Heart left ventricle (tissue), 16 donors: ENCODE measurements at regions of chr20 and their contacts with region 1.

Region 1: DNA sequence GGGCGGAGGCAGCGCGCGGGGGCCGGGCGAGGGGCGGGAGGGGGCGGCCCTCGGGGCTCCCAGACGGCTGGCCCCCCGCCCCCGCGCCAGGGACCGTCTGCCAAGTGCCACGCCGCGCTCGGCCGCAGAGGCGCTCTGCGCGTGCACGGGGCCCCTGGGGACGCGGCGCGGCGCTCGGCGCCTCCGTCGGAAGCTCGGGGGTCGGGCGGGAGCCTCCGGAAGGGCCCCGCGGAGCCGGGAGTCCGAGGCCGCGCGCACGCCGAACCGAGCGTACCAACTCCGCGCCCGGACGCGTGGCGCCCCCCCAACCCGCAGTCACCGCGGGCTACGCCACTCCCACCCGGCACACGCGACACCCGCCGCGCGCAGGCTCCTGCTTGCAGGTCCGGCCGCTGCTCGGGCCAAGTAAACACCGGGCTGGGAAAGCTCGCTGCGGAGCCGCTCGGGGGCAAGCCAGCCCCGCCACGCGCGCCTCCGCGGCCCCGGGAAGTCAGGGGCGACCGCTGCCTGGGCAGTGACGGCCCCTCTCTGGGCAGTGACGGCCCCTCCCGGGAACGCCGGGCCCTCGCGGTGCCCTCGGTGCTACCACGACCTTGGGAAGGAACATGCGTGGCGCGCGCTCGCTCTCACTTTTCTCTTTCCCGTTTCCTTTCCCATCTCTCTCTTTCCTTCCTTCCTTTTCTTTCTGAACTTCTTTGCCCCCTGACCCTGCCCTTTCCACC is 384 bp upstream of the PREX1 start:
- DNase-seq: peak; percentile 81 to 91 (median 86)
- ATAC-seq: peak; percentile 6 to 83 (median 73)
- H3K4me3 ChIP-seq: peak overlapping the region; percentile 45 to 89 (median 66)
- H3K27ac ChIP-seq: peak overlapping the region; percentile 19 to 92 (median 67)
- H3K4me1 ChIP-seq: peaks cover 0 to 69% (median 22%) of the 10 kb centered on the region in 12 donors
- H3K27me3 ChIP-seq: no peaks in the 10 kb centered on the region
- CTCF ChIP-seq: peak in 5 of 12 donors; percentile 12 to 30 (median 22)
- POLR2A ChIP-seq: peak in 1 of 2 donors; percentile 59

Region 2: GRCh38 chr20:48614575-48615279 is 213.5 kb before region 1 on chr20:
- intact Hi-C with region 1: no loop called
- DNase-seq: no peak
- ATAC-seq: no peak
- H3K4me3 ChIP-seq: no peak overlapping the region
- H3K27ac ChIP-seq: no peak overlapping the region
- H3K4me1 ChIP-seq: peaks cover 0 to 3% (median under 1%) of the 10 kb centered on the region in 12 donors
- H3K27me3 ChIP-seq: peaks cover 0 to 6% (median 0%) of the 10 kb centered on the region in 9 donors
- CTCF ChIP-seq: no peak
- POLR2A ChIP-seq: no peak

Region 3: DNA sequence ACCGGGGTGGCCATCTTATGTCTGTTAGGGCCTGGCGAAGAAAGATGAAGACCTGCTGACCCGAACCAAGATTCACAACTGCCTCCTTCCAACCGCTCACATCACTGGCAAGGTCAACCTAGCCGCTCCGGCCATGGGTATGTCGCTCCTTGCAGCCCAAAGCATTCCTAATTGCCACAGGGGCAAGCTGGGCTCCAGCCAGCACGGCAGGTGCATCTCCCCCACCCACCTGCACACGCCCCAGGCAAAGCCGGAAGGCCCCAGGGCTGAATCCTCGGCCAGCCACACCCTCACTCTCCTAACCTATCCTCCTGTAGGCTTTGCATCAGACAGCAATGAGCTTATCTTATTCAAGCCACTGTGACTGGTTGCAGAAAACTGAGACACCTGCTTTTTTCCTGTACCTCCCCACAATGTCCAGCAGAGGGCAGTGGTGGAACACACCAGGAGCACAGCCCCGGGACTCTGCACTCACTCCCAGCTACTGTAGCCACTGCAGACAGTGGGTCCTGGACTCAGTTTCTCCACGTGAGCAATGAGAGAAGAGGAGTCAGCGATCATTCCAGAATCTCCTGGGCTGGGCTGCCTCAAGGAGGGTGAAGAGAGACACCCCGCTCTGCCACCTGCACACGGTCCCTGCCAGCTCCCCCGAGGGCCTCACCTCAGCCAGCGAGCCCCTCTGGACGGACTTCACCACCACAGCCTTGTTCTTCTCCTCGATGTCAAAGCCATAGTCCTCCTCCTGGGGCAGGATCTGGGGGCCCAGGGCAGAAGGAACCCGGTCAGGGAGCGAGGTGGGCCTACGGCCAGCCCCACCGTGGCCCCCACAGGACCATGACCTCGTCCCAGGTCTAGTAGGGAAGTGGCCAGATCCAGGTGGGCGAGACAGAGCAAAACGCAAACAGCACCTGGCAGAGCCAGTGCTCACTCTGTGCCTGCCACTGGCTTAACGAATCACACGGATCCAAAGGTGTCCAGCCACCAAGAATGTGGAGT is 170.4 kb before region 1 on chr20:
- intact Hi-C with region 1: loop called in 8 of 10 experiments (anchors 5 to 10 kb)
- DNase-seq: peak in 4 of 5 donors; percentile 64 to 70 (median 68)
- ATAC-seq: peak; percentile 78 to 90 (median 84)
- H3K4me3 ChIP-seq: no peak overlapping the region
- H3K27ac ChIP-seq: no peak overlapping the region
- H3K4me1 ChIP-seq: peaks cover 0 to 8% (median 0%) of the 10 kb centered on the region in 12 donors
- H3K27me3 ChIP-seq: no peaks in the 10 kb centered on the region
- CTCF ChIP-seq: peak; percentile 91 to 99 (median 95)
- POLR2A ChIP-seq: no peak

Region 4: DNA sequence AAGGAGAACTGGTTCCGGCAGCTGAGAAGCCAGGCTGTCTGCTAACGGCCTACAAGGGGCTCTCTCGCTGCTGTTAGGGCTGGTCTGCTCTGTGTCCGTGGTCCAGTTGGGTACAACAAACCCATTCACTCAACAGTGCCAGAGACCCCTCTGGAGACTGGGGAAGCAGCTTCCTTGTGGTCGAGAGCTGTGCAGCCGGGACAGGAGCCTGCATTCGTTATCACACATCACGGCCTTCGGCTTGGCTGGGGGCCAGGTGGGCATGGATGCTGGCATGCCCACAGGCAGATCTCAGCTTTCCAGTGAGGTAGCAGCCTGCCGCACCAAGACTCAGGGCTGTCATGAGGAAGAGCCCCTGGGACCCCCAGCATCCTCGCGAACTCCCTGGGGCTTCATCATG is 125.1 kb before region 1 on chr20:
- intact Hi-C with region 1: loop called in 1 of 10 experiments (anchors 5 kb)
- DNase-seq: peak in 4 of 5 donors; percentile 43 to 77 (median 70)
- ATAC-seq: peak in 3 of 4 donors; percentile 23 to 51 (median 44)
- H3K4me3 ChIP-seq: no peak overlapping the region
- H3K27ac ChIP-seq: peak overlapping the region in 2 of 12 donors; percentile 24 to 58
- H3K4me1 ChIP-seq: peaks cover 0 to 50% (median 22%) of the 10 kb centered on the region in 12 donors
- H3K27me3 ChIP-seq: no peaks in the 10 kb centered on the region
- CTCF ChIP-seq: no peak
- POLR2A ChIP-seq: no peak

Region 5: GRCh38 chr20:48760403-48760983 is 67.7 kb before region 1 on chr20:
- intact Hi-C with region 1: loop called in 2 of 10 experiments (anchors 5 kb)
- DNase-seq: peak in 3 of 5 donors; percentile 32 to 66 (median 41)
- ATAC-seq: peak; percentile 23 to 68 (median 57)
- H3K4me3 ChIP-seq: peak overlapping the region in 1 of 12 donors; percentile 23
- H3K27ac ChIP-seq: peak overlapping the region; percentile 26 to 87 (median 62)
- H3K4me1 ChIP-seq: peaks cover 0 to 92% (median 23%) of the 10 kb centered on the region in 12 donors
- H3K27me3 ChIP-seq: no peaks in the 10 kb centered on the region
- CTCF ChIP-seq: no peak
- POLR2A ChIP-seq: no peak

Region 6: DNA sequence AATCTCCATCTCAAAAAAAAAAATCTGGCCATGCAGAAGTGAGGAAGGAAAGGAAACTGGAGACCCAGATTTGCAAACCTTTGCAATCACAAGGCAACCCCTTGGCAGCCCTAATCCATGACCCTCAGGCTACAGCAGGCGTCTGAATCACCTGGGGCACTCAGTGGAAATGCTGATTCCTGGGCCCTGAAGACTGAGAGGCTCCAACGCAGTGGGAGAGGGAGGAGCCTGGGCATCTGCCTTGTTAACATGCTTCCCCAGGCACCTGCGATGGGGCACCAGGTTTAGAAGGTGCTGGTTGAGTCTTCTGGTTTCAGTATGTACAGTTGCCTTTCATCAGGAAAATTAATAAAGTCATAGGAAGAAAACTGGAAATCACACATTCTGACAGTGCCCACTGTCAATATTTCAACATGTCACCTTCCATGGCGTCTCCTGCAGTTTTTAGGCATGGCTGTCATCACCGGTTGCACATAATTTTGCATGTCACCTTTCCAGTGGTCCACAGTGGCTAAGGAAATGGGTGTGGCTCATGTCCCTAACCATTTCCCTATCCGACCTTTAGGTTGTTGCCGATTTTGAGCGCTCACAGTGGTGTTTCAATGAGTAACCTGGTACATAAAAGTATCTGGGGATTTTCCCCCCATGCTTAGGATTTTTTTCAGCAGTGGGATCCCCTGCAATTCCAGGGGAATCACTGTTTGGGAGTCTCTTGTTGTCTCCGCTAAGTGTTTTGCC is 57.3 kb before region 1 on chr20:
- intact Hi-C with region 1: no loop called
- DNase-seq: no peak
- ATAC-seq: no peak
- H3K4me3 ChIP-seq: no peak overlapping the region
- H3K27ac ChIP-seq: peak overlapping the region in 1 of 12 donors; percentile 84
- H3K4me1 ChIP-seq: peaks cover 0 to 99% (median 4%) of the 10 kb centered on the region in 12 donors
- H3K27me3 ChIP-seq: no peaks in the 10 kb centered on the region
- CTCF ChIP-seq: no peak
- POLR2A ChIP-seq: no peak

Region 7: DNA sequence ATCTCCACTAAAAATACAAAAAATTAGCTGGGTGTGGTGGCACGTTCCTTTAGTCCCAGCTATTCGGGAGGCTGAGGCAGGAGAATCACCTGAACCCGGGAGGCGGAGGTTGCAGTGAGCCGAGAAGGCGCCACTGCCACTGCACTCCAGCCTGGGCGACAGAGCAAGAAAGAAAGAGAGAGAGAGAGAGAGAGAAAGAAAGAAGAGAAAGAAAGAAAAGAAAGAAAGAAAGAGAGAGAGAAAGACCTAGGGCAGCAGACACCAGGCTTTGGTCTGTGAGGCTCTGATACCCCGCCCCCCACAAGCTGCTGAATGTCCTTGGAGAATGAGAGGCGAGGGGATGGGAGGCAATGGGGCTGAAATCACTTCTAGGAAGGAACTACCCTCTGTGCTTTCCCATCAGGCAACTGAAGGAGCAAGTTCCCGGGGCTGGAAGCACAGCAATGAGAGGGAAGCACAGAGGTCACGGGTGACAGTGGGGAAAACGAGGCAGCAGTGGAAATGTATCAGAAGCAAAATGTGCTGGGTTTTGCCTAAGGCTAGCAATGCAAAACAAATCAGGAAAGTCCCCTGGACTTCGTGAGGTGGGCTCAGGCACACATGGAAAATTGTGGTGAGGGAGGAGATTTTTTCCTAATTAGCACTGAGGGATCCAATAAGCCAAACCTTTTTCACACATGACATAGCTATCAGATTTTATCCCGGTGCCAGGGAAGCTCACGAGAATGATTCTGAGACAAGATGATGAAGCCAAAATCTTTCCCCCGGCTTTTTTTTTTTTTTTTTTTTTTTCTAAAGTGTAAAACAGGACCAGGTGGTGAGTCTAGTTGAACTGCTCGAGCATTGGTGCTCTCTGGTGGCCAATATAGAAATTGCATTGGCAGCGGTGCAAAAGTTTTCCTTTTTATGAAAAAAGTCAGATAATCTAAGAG is 76.4 kb after region 1 on chr20:
- intact Hi-C with region 1: loop called in 4 of 10 experiments (anchors 5 to 10 kb)
- DNase-seq: peak in 2 of 5 donors; percentile 26 to 39
- ATAC-seq: peak in 3 of 4 donors; percentile 48 to 52 (median 50)
- H3K4me3 ChIP-seq: no peak overlapping the region
- H3K27ac ChIP-seq: no peak overlapping the region
- H3K4me1 ChIP-seq: peaks cover 0 to 27% (median 4%) of the 10 kb centered on the region in 12 donors
- H3K27me3 ChIP-seq: no peaks in the 10 kb centered on the region
- CTCF ChIP-seq: peak; percentile 81 to 90 (median 84)
- POLR2A ChIP-seq: no peak